Cardiac septum (tissue), 1 donor: ENCODE measurements at regions of chr3 and their contacts with region 1.

Region 1: GRCh38 chr3:29280404-29281093 is at the start of gene RBMS3:
- DNase-seq: peak; percentile 89
- total RNA-seq, gene RBMS3: 49.0 TPM

Region 2: DNA sequence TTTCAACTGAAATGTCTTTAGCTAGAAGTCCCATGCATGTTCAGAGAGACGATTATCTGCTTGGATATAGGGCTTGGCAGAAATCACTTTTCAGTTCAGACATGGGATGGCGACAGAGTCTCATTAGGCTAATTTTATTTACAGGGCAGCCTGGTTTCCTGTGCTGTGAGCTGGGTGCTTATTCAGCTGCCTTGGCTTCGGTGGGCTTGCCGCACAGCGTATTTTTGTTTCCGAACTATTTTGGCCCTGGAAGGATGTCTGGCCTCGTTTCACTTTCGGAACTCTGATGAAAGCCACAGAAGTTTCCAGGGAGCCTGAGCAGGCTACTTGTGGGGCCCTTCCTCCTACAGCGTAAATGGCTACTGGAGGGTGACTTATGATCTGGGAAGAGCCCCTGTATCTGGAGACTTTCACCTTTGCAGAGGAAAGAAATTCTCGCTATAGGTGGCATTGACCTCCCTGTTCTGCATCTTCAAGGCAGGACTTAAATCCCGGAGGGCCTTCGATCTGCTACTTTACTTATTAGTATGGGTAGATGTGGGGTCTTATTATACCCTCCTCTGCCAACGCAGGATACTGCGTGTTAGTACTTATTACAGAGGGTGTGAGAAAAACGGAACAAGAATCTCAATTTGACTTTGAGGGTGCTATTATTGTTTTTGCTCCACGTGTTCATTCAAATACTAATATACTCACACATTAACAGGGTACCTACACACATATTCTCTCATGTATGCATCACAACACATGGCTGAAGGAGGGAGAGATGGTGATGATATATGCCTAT is 363.6 kb before region 1 on chr3:
- intact Hi-C with region 1: loop called (anchors 2 kb)
- DNase-seq: peak; percentile 78

Region 3: GRCh38 chr3:29011441-29011840 is 269.1 kb before region 1 on chr3:
- intact Hi-C with region 1: no loop called
- DNase-seq: no peak

Region 4: DNA sequence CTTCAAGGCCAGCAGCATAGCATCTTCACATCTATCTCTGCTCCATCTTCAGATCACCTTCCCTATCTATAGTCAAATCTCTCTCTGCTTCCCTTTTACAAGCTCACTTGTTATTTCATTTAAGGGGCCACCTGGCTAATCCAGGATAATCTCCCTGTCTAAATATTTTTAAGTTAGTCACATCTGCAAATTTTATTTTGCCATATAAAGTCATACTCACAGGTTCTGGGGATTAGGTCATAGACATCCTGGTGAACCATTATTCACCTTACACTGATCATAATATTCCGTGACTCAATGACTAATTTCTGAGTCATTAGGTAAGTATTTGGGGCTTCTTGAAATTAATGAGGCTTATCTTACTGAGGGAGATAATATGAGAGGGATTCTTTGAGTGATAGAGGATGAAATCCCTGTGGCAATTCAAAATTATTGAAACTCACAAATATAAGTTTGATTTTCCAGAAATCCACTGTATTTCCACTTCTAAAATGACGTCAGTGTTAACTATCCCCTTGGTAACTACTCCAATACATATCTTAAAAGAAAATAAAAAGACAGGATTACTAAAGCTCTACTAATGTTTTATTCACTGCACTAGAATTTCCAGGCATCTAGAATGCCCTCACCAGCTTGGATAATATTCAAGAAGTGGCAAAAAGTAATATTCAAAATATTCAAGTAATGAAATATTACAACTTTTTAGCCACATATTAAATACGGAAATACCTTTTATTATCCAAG is 93.4 kb before region 1 on chr3:
- intact Hi-C with region 1: no loop called
- DNase-seq: no peak

Region 5: GRCh38 chr3:29331456-29332194 is 51.1 kb after region 1 on chr3:
- intact Hi-C with region 1: loop called (anchors 2 kb)
- DNase-seq: no peak

Region 6: GRCh38 chr3:29353807-29354206 is 73.3 kb after region 1 on chr3:
- intact Hi-C with region 1: no loop called
- DNase-seq: no peak

Region 7: GRCh38 chr3:29412110-29412509 is 131.6 kb after region 1 on chr3:
- intact Hi-C with region 1: loop called (anchors 5 kb)
- DNase-seq: no peak

Region 8: GRCh38 chr3:29465836-29466235 is 185.3 kb after region 1 on chr3:
- intact Hi-C with region 1: no loop called
- DNase-seq: no peak

Region 9: GRCh38 chr3:29642393-29643033 is 362.0 kb after region 1 on chr3:
- intact Hi-C with region 1: loop called (anchors 5 kb)
- DNase-seq: no peak

Region 10: GRCh38 chr3:29759411-29760225 is 479.1 kb after region 1 on chr3:
- intact Hi-C with region 1: loop called (anchors 2 kb)
- DNase-seq: no peak